Keratinocyte (primary cell): ENCODE measurements at regions of chr13 and their contacts with region 1.

Region 1: DNA sequence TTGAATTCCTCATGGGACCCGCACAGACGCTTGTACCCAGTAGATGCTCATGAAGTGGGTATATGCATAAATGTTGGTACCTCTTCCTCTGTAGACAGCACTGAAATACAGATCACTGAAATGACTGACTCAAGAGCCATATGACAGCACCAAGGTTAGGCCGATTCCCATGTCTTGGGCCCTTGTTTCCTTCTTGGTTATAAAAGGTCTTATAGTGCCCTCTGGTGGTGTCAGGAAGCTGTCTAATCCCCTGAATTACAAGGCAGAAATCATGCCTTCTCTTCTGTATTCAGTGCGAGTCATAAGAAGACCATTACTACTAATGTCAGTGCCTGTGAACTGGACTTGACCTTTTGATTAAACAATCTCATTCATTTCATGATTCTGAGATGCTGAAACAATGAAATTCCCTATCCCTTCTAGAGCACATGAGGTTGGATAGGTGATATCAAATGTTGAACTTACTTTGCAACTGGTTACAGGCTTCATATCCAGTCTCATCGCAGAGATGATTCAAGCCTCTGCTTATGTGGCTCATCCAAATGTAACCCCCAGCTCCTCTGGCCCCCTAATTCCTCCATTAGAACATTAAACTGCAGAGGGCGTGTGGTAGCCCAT is 59.7 kb downstream of the SPATA13 start:
- DNase-seq: peak; percentile 38
- H3K4me3 ChIP-seq: no peak overlapping the region
- H3K27ac ChIP-seq: no peak overlapping the region
- H3K4me1 ChIP-seq: peaks cover 4% of the 10 kb centered on the region
- H3K27me3 ChIP-seq: no peaks in the 10 kb centered on the region
- CTCF ChIP-seq: peak; percentile 54 to 74 (median 63)

Region 2: GRCh38 chr13:23915308-23915707 is 304.9 kb before region 1 on chr13:
- dilution Hi-C with region 1: loop called (anchors 10 kb)
- DNase-seq: no peak
- H3K4me3 ChIP-seq: no peak overlapping the region
- H3K27ac ChIP-seq: no peak overlapping the region
- H3K4me1 ChIP-seq: peaks cover 4% of the 10 kb centered on the region
- H3K27me3 ChIP-seq: no peaks in the 10 kb centered on the region
- CTCF ChIP-seq: peak in 1 of 3 experiments; percentile 36

Region 3: DNA sequence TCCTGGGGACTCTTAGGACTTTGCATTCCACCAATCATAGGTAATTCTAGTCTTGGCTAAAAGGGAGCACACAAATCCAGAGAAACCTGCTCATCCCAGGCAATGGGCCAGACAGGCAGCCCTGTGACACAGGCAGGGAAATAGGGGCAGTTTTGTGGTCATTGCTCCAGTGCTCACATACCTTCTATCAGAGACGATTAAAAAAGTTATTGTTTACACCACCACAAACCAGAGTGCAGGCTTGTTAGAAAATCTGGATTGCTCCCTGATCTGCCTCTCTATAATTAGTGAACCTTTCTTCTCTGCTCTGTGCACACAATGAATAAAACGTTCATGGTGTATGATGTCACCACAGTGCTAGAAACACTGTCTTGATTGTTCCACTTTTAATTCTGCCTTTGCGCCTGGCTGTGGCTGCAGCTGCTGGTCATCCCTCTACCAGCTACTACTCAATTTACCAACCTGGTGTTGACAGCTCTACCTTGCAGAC is 181.3 kb before region 1 on chr13:
- dilution Hi-C with region 1: loop called (anchors 25 kb)
- DNase-seq: no peak
- H3K4me3 ChIP-seq: no peak overlapping the region
- H3K27ac ChIP-seq: no peak overlapping the region
- H3K4me1 ChIP-seq: no peaks in the 10 kb centered on the region
- H3K27me3 ChIP-seq: peaks cover 3% of the 10 kb centered on the region
- CTCF ChIP-seq: no peak

Region 4: DNA sequence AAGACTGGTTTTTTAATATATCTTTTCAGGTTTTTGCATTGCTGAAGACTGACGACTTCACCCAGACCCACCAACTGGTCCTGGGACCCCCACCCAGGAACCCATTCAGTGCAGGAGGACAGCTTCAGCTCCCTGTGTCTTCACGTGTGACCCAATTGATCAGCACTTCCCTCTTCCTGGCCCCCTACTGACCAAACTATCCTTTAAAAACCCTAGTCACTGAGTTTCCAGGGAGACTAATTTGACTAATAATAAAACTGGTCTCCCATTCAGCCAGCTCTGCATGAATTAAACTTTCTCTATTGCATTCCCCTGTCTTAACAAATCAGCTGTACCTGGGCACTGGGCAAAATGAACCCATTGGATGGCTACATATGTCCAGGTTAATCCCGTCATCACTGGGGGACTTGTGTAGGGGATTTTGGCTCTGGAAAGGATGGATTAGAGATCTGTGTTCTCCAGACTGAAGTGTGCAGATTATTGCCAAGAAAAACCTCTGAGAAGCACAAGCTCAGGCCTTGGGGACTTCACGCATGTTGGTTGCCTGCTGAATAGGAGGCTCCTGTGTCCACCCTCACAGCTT is 308.7 kb after region 1 on chr13:
- dilution Hi-C with region 1: no loop called
- DNase-seq: no peak
- H3K4me3 ChIP-seq: no peak overlapping the region
- H3K27ac ChIP-seq: no peak overlapping the region
- H3K4me1 ChIP-seq: no peaks in the 10 kb centered on the region
- H3K27me3 ChIP-seq: peaks cover 2% of the 10 kb centered on the region
- CTCF ChIP-seq: no peak